ENCODE measurements at regions of chr20 and their contacts with region 1.

Region 1: GRCh38 chr20:45373353-45374100 is 4.6 kb downstream of the TP53TG5 start:
- DNase-seq: peak; percentile 79 to 98 (median 90)

Region 2: GRCh38 chr20:45322952-45323383 is 50.6 kb before region 1 on chr20:
- intact Hi-C with region 1: loop called (anchors 2 kb)
- DNase-seq: peak in 6 of 10 donors; percentile 47 to 91 (median 57)

Region 3: GRCh38 chr20:45406259-45407066 is 32.9 kb after region 1 on chr20:
- intact Hi-C with region 1: loop called (anchors 5 kb)
- DNase-seq: peak; percentile 60 to 95 (median 72)